A549 (cell line): ENCODE measurements at regions of chr11 and their contacts with region 1.

Region 1: DNA sequence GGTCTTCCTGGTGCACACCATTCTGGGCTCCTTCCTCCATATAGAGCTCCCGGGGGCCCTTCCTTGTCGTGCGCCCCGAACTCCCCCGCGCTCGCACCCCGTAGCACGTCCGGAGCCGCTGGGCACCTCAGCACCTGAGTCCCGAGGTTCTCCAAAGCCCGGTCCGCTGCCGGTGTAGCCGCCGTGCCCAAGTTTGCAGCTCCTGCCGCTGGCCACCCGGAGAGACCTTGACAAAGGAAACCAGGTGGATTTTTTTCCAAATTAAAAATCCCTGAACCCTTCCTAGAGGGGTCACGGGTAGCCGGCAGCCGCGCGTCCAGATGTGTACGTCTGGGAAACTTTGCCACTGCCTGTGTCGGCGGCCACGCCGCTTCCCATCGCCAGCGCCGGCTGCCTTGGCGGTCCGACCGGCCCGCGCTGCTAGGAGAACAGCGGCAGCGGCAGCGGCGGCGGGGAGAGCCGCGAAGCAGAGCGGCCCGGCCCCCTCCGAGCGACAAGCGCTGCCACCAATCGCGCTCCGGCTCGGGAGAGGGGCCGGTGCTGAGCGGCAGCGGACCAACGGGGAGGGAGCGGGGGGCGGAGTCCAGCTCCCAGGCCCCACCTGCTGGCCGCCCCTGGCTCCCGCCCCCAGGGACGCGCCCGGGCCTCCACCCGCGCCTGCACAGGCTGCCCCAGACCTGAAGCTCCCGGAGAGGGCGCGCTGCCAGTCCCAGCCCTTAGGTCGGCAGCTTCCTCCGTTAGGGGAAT is at the start of gene GALNT18:
- DNase-seq: peak; percentile 92 to 94
- ATAC-seq: peak; percentile 82 to 94
- H3K4me3 ChIP-seq: peak within 1 kb of the TSS; percentile 56
- H3K27ac ChIP-seq: peak within 1 kb of the TSS; percentile 83 to 90
- H3K4me1 ChIP-seq: peaks cover 31% of the 10 kb centered on the region
- CTCF ChIP-seq: peak; percentile 26; the same call in 1 of the 3 replicates
- EP300 ChIP-seq: no peak
- POLR2A ChIP-seq: peak; percentile 79
- RAD21 ChIP-seq: peak; percentile 9 to 28; a peak in 1 of 5 replicates
- polyA plus RNA-seq, gene GALNT18: 6.7 TPM in 2 replicates

Region 2: GRCh38 chr11:11584446-11584810 is 37.3 kb before region 1 on chr11:
- CTCF ChIA-PET with region 1: interaction called, 4 read pairs
- POLR2A ChIA-PET with region 1: interaction called, 20 read pairs
- DNase-seq: peak; percentile 80 to 82
- ATAC-seq: peak; percentile 90 to 98
- H3K4me3 ChIP-seq: no peak overlapping the region
- H3K27ac ChIP-seq: peak overlapping the region; percentile 49 to 81
- H3K4me1 ChIP-seq: peaks cover 39% of the 10 kb centered on the region
- CTCF ChIP-seq: no peak
- EP300 ChIP-seq: no peak
- POLR2A ChIP-seq: no peak
- RAD21 ChIP-seq: 0 out of 5 replicates have a peak, but pooled peaks of 1 of the 2 experiments have one; percentile 20

Region 3: GRCh38 chr11:11608783-11609232 is 12.9 kb before region 1 on chr11:
- CTCF ChIA-PET with region 1: interaction called, 34 read pairs
- POLR2A ChIA-PET with region 1: interaction called, 13 read pairs
- DNase-seq: peak in 1 of 2 experiments; percentile 29
- ATAC-seq: peak; percentile 63 to 68; a peak in 5 of 6 replicates
- H3K4me3 ChIP-seq: no peak overlapping the region
- H3K27ac ChIP-seq: peak overlapping the region; percentile 56 to 68
- H3K4me1 ChIP-seq: peaks cover 32% of the 10 kb centered on the region
- CTCF ChIP-seq: no peak
- EP300 ChIP-seq: 0 out of 5 replicates have a peak, but pooled peaks of 1 of the 2 experiments have one; percentile 21
- POLR2A ChIP-seq: no peak
- RAD21 ChIP-seq: no peak

Region 4: DNA sequence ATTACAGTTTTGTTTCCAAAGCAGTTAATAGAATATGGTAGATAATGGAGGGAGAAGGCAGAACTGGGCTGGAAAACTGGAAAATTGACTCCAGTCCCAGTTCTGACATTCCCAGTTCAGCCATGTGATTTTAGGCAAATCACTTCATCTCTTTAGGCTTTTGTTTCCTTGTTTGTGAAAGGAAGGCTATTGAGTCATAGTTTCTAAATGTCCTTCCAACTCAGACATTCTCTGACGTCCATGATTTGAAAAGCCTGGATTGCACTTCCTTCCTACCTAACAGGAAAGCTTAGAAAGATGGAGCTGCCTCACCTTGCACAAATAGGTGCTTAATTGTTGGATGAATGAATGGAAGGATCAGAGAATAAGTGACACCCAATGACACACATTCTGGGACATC is 19.8 kb after region 1 on chr11:
- CTCF ChIA-PET with region 1: interaction called, 14 read pairs
- POLR2A ChIA-PET with region 1: no interaction called
- DNase-seq: peak in 1 of 2 experiments; percentile 16
- ATAC-seq: no peak
- H3K4me3 ChIP-seq: no peak overlapping the region
- H3K27ac ChIP-seq: no peak overlapping the region
- H3K4me1 ChIP-seq: no peaks in the 10 kb centered on the region
- CTCF ChIP-seq: no peak
- EP300 ChIP-seq: no peak
- POLR2A ChIP-seq: no peak
- RAD21 ChIP-seq: no peak